ENCODE measurements at regions of chr20 and their contacts with region 1.

Region 1: GRCh38 chr20:62010551-62011402 is 54.9 kb downstream of the TAF4 start:
- DNase-seq: peak; percentile 7
- ATAC-seq: peak; percentile 91
- H3K4me3 ChIP-seq: no peak overlapping the region
- H3K27ac ChIP-seq: no peak overlapping the region
- H3K4me1 ChIP-seq: no peaks in the 10 kb centered on the region
- H3K27me3 ChIP-seq: no peaks in the 10 kb centered on the region
- CTCF ChIP-seq: peak; percentile 51 to 79 (median 54); a peak in 4 of 6 replicates
- EP300 ChIP-seq: no peak
- POLR2A ChIP-seq: no peak
- RAD21 ChIP-seq: peak; percentile 82

Region 2: GRCh38 chr20:62129731-62130531 is 119.2 kb after region 1 on chr20:
- CTCF ChIA-PET with region 1: interaction called, 35 read pairs
- POLR2A ChIA-PET with region 1: no interaction called
- RAD21 ChIA-PET with region 1: interaction called, 3 read pairs
- SMC1A ChIA-PET with region 1: interaction called, 4 read pairs
- in situ Hi-C with region 1: loop called (anchors 5 kb)
- intact Hi-C with region 1: no loop called
- DNase-seq: no peak
- ATAC-seq: no peak
- H3K4me3 ChIP-seq: no peak overlapping the region
- H3K27ac ChIP-seq: no peak overlapping the region
- H3K4me1 ChIP-seq: no peaks in the 10 kb centered on the region; the same call in 1 of the 2 replicates
- H3K27me3 ChIP-seq: no peaks in the 10 kb centered on the region
- CTCF ChIP-seq: no peak
- EP300 ChIP-seq: no peak
- POLR2A ChIP-seq: no peak
- RAD21 ChIP-seq: no peak

Region 3: DNA sequence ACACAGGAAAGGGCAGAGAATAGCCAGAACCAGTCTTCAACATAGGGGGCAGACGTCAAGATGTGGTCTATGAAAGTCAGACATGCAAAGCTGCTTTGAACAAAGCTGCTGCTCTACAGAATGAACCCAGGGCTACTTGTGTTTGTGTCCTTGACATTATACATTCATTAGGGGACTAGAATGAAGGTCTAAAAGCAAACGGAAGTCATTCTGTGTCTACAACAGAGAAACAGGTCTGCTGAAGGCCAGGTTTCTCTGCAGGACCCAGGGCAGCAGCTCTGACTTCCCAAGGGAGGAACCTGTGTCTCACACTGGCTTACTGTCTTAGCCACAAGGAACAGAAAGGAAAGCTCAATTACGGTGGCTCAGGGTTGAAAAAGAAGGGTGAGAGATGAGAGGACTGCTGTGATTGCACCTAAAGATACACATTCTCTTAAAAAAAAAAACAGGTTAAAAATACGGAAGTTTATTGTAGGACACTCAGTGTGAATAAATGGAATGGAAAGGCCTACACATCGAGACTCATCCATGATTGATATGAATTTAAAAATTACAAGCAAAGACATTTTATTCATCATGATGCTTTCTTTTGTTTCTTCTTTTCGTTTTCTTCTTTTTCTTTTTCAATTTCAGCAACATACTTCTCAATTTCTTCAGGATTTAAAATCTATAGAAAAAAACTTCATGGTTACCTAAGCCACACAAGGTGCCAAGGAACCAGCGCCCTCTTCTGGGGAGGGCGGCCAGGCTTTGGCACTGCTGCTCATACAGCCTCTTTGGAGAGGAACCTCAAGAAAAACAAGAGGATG is 125.7 kb after region 1 on chr20:
- CTCF ChIA-PET with region 1: interaction called, 35 read pairs
- POLR2A ChIA-PET with region 1: no interaction called
- RAD21 ChIA-PET with region 1: interaction called, 18 read pairs
- SMC1A ChIA-PET with region 1: interaction called, 14 read pairs
- in situ Hi-C with region 1: no loop called
- intact Hi-C with region 1: loop called (anchors 2 kb)
- DNase-seq: no peak
- ATAC-seq: peak; percentile 78
- H3K4me3 ChIP-seq: no peak overlapping the region
- H3K27ac ChIP-seq: no peak overlapping the region
- H3K4me1 ChIP-seq: peaks cover 8% of the 10 kb centered on the region
- H3K27me3 ChIP-seq: no peaks in the 10 kb centered on the region
- CTCF ChIP-seq: peak; percentile 73 to 82 (median 79)
- EP300 ChIP-seq: no peak
- POLR2A ChIP-seq: no peak
- RAD21 ChIP-seq: peak; percentile 69

Region 4: GRCh38 chr20:62143118-62143973 is 132.6 kb after region 1 on chr20 and contains the starts of genes PSMA7 and SS18L1:
- CTCF ChIA-PET with region 1: interaction called, 20 read pairs
- POLR2A ChIA-PET with region 1: no interaction called
- RAD21 ChIA-PET with region 1: interaction called, 18 read pairs
- SMC1A ChIA-PET with region 1: interaction called, 14 read pairs
- in situ Hi-C with region 1: no loop called
- intact Hi-C with region 1: no loop called
- DNase-seq: no peak
- ATAC-seq: peak; percentile 88
- H3K4me3 ChIP-seq: peak within 1 kb of the TSS; percentile 93
- H3K27ac ChIP-seq: peak within 1 kb of the TSS; percentile 80
- H3K4me1 ChIP-seq: peaks cover 12% of the 10 kb centered on the region
- H3K27me3 ChIP-seq: no peaks in the 10 kb centered on the region
- CTCF ChIP-seq: no peak
- EP300 ChIP-seq: no peak
- POLR2A ChIP-seq: peak; percentile 92
- RAD21 ChIP-seq: no peak
- polyA plus RNA-seq, gene PSMA7: 333 to 546 TPM
- polyA plus RNA-seq, gene SS18L1: 1.8 to 2.2 TPM

Region 5: DNA sequence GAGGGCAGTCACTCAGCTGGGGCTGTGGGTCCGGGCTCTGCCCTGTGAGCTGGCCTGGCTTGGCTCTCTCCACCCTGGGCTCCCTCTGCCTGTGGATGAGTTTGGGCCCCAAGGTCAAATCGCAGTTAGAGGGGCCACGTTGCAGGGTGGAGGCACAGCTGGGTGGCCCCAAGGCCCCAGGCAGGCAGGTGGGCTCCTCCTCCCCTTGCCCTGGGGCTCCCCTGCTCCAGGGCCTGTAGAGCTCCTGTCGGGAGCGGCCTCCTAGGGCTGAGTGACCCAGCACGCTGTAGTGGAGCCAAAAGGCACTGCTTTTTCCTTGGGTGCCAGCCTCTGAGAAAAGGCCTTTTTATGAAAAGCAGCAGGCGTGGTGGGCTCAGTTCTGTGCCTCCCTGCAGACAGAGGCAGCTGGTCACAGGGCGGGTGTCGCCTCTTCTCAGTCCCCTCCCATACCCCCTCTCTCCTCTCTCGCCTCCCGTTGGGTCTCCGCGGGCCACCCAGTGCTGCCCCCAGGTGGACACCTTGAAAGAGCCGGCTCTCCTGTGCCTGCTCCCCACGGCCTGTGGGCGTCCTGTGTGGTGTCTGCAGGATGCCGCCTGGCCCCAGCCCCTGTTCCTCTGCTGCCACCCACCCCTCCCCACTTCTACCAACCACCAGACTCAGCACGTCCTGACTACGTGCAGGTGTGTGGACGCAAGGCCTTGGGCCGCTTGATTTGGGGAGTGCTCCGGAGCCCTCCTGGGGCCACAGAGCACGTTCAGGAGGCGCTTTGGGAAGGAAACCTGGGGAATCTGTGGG is 146.0 kb after region 1 on chr20:
- CTCF ChIA-PET with region 1: interaction called, 8 read pairs
- POLR2A ChIA-PET with region 1: no interaction called
- RAD21 ChIA-PET with region 1: no interaction called
- SMC1A ChIA-PET with region 1: interaction called, 5 read pairs
- in situ Hi-C with region 1: no loop called
- intact Hi-C with region 1: loop called (anchors 1 kb)
- DNase-seq: no peak
- ATAC-seq: peak; percentile 97
- H3K4me3 ChIP-seq: no peak overlapping the region
- H3K27ac ChIP-seq: no peak overlapping the region
- H3K4me1 ChIP-seq: peaks cover 9% of the 10 kb centered on the region
- H3K27me3 ChIP-seq: no peaks in the 10 kb centered on the region
- CTCF ChIP-seq: peak; percentile 57 to 80 (median 63)
- EP300 ChIP-seq: no peak
- POLR2A ChIP-seq: no peak
- RAD21 ChIP-seq: peak; percentile 44; the same call in 1 of the 2 replicates

Region 6: GRCh38 chr20:62386383-62387218 is 375.8 kb after region 1 on chr20 and contains the start of gene RPS21:
- CTCF ChIA-PET with region 1: interaction called, 9 read pairs
- POLR2A ChIA-PET with region 1: interaction called, 3 read pairs
- RAD21 ChIA-PET with region 1: interaction called, 6 read pairs
- SMC1A ChIA-PET with region 1: interaction called, 3 read pairs
- in situ Hi-C with region 1: loop called (anchors 25 kb)
- intact Hi-C with region 1: loop called (anchors 10 kb)
- DNase-seq: peak; percentile 54
- ATAC-seq: peak; percentile 92
- H3K4me3 ChIP-seq: peak within 1 kb of the TSS; percentile 100
- H3K27ac ChIP-seq: peak within 1 kb of the TSS; percentile 93
- H3K4me1 ChIP-seq: peaks cover 4% of the 10 kb centered on the region
- H3K27me3 ChIP-seq: no peaks in the 10 kb centered on the region
- CTCF ChIP-seq: no peak
- EP300 ChIP-seq: no peak
- POLR2A ChIP-seq: peak; percentile 94
- RAD21 ChIP-seq: no peak
- polyA plus RNA-seq, gene RPS21: 3,290 to 4,046 TPM

Measured in GM12878 (cell line).